Activated naive CD4-positive, alpha-beta T cell treated with anti-CD3 and anti-CD28 coated beads for 36 hours (primary cell): ENCODE measurements at regions of chr11 and their contacts with region 1.

Region 1: GRCh38 chr11:113773416-113774173 is at the start of gene ZW10:
- DNase-seq: peak; percentile 94
- H3K4me3 Mint-ChIP-seq: peak within 1 kb of the TSS; percentile 100
- H3K27ac Mint-ChIP-seq: peak within 1 kb of the TSS; percentile 96
- H3K4me1 Mint-ChIP-seq: peaks cover 19% of the 10 kb centered on the region
- H3K27me3 Mint-ChIP-seq: no peaks in the 10 kb centered on the region
- total RNA-seq, gene ZW10: 10.7 to 11.6 TPM

Region 2: GRCh38 chr11:112226062-112226830 is 1547.3 kb before region 1 on chr11 and contains the start of gene PTS:
- CTCF ChIA-PET with region 1: no interaction called
- intact Hi-C with region 1: loop called (anchors 5 kb)
- DNase-seq: peak; percentile 86
- H3K4me3 Mint-ChIP-seq: peak within 1 kb of the TSS; percentile 88
- H3K27ac Mint-ChIP-seq: peak within 1 kb of the TSS; percentile 91
- H3K4me1 Mint-ChIP-seq: peaks cover 17% of the 10 kb centered on the region
- H3K27me3 Mint-ChIP-seq: no peaks in the 10 kb centered on the region
- total RNA-seq, gene PTS: 34.6 to 39.0 TPM

Region 3: DNA sequence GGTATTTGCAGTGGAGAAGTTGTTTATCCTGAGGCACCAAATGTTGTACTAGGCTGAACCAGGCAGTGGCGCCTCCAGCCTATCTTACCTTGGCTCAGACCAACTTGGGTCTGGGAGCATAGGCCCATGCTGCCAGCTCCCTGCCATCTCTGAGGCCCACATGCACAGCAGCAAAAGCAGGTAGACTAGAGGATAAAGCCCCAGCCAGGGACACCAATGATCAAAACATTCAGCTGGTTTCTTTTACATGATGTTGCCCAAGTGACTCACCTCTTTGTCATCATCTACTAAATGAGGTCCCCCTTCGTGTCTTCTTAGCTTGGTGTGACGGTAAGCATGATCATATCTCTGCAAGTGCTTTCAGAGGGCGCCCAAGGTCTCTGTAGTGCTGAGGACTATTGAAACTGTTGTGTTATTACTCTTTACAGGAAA is 186.3 kb before region 1 on chr11:
- CTCF ChIA-PET with region 1: no interaction called
- intact Hi-C with region 1: loop called (anchors 1 kb)
- DNase-seq: peak; percentile 59
- H3K4me3 Mint-ChIP-seq: no peak overlapping the region
- H3K27ac Mint-ChIP-seq: no peak overlapping the region
- H3K4me1 Mint-ChIP-seq: peaks cover 4% of the 10 kb centered on the region
- H3K27me3 Mint-ChIP-seq: peaks cover 11% of the 10 kb centered on the region

Region 4: GRCh38 chr11:113736323-113736722 is 37.3 kb before region 1 on chr11:
- CTCF ChIA-PET with region 1: interaction called, 3 read pairs
- intact Hi-C with region 1: loop called (anchors 2 kb)
- DNase-seq: no peak
- H3K4me3 Mint-ChIP-seq: no peak overlapping the region
- H3K27ac Mint-ChIP-seq: no peak overlapping the region
- H3K4me1 Mint-ChIP-seq: peaks cover 12% of the 10 kb centered on the region
- H3K27me3 Mint-ChIP-seq: no peaks in the 10 kb centered on the region

Region 5: GRCh38 chr11:113760241-113760640 is 13.4 kb before region 1 on chr11:
- CTCF ChIA-PET with region 1: no interaction called
- intact Hi-C with region 1: no loop called
- DNase-seq: no peak
- H3K4me3 Mint-ChIP-seq: no peak overlapping the region
- H3K27ac Mint-ChIP-seq: no peak overlapping the region
- H3K4me1 Mint-ChIP-seq: no peaks in the 10 kb centered on the region
- H3K27me3 Mint-ChIP-seq: no peaks in the 10 kb centered on the region

Region 6: GRCh38 chr11:113875234-113876073 is 101.9 kb after region 1 on chr11 and contains the start of gene USP28:
- CTCF ChIA-PET with region 1: no interaction called
- intact Hi-C with region 1: loop called (anchors 1 kb)
- DNase-seq: peak; percentile 71
- H3K4me3 Mint-ChIP-seq: peak within 1 kb of the TSS; percentile 95
- H3K27ac Mint-ChIP-seq: peak within 1 kb of the TSS; percentile 87
- H3K4me1 Mint-ChIP-seq: peaks cover 34% of the 10 kb centered on the region
- H3K27me3 Mint-ChIP-seq: no peaks in the 10 kb centered on the region
- total RNA-seq, gene USP28: 26.1 to 26.8 TPM

Region 7: DNA sequence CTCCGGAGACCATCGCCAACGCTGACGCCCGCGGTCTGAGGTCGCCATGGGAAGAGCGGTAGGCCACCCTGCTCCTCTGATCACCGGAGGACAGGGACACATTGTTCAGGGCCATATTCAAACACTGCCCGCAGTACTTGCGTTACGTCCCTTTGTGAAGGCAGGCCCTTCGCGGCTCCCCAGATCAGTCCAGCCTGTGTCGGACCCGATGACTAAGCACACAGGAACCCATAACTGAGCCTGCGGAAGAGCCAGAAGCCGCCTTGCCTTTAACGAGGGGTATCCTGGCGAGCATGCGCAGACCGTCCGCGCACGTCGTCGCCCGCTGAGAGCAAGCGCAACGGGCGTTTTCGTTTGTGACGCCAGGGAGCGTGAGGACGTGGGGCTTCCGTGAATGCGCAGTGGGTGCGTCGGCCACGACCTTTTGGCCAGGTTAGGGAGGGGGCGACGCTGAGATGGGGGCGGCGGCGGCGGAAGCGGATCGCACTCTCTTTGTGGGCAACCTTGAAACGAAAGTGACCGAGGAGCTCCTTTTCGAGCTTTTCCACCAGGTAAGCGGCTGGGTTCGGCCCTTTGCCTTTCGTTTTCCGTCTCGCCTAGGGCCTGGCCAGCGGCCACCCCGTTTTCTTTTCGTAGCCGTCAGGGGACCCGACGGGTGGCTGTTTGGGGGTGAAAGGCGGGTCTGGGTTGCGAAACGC is 626.8 kb after region 1 on chr11 and contains the starts of genes C11orf71 and RBM7:
- CTCF ChIA-PET with region 1: no interaction called
- intact Hi-C with region 1: loop called (anchors 10 kb)
- DNase-seq: peak; percentile 98
- H3K4me3 Mint-ChIP-seq: peak within 1 kb of the TSS; percentile 90
- H3K27ac Mint-ChIP-seq: peak within 1 kb of the TSS; percentile 97
- H3K4me1 Mint-ChIP-seq: peaks cover 44% of the 10 kb centered on the region
- H3K27me3 Mint-ChIP-seq: no peaks in the 10 kb centered on the region
- total RNA-seq, gene C11orf71: 7.5 to 7.6 TPM
- total RNA-seq, gene RBM7: 36.9 to 41.7 TPM